Activated CD4-positive, alpha-beta T cell treated with anti-CD3 and anti-CD28 coated beads for 36 hours (primary cell): ENCODE measurements at regions of chr16 and their contacts with region 1.

Region 1: GRCh38 chr16:67935402-67936123 is 1.1 kb downstream of the PSMB10 start:
- DNase-seq: peak; percentile 98
- ATAC-seq: peak; percentile 91
- H3K4me3 Mint-ChIP-seq: peak overlapping the region; percentile 100
- H3K27ac Mint-ChIP-seq: peak overlapping the region; percentile 100
- H3K4me1 Mint-ChIP-seq: peaks cover 37% of the 10 kb centered on the region
- H3K27me3 Mint-ChIP-seq: no peaks in the 10 kb centered on the region

Region 2: GRCh38 chr16:67226804-67227557 is 708.6 kb before region 1 on chr16 and contains the start of gene TMEM208:
- CTCF ChIA-PET with region 1: no interaction called
- POLR2A ChIA-PET with region 1: no interaction called
- intact Hi-C with region 1: loop called in 1 of 2 experiments (anchors 2 kb)
- DNase-seq: peak; percentile 99
- ATAC-seq: peak; percentile 97
- H3K4me3 Mint-ChIP-seq: peak within 1 kb of the TSS; percentile 98
- H3K27ac Mint-ChIP-seq: peak within 1 kb of the TSS; percentile 98
- H3K4me1 Mint-ChIP-seq: peaks cover 42% of the 10 kb centered on the region
- H3K27me3 Mint-ChIP-seq: no peaks in the 10 kb centered on the region
- total RNA-seq, gene TMEM208: 13.6 to 31.2 TPM

Region 3: GRCh38 chr16:67514382-67514828 is 421.2 kb before region 1 on chr16:
- CTCF ChIA-PET with region 1: no interaction called
- POLR2A ChIA-PET with region 1: no interaction called
- intact Hi-C with region 1: no loop called
- DNase-seq: peak; percentile 91
- ATAC-seq: peak; percentile 91
- H3K4me3 Mint-ChIP-seq: no peak overlapping the region
- H3K27ac Mint-ChIP-seq: peak overlapping the region; percentile 55
- H3K4me1 Mint-ChIP-seq: peaks cover 8% of the 10 kb centered on the region
- H3K27me3 Mint-ChIP-seq: no peaks in the 10 kb centered on the region

Region 4: DNA sequence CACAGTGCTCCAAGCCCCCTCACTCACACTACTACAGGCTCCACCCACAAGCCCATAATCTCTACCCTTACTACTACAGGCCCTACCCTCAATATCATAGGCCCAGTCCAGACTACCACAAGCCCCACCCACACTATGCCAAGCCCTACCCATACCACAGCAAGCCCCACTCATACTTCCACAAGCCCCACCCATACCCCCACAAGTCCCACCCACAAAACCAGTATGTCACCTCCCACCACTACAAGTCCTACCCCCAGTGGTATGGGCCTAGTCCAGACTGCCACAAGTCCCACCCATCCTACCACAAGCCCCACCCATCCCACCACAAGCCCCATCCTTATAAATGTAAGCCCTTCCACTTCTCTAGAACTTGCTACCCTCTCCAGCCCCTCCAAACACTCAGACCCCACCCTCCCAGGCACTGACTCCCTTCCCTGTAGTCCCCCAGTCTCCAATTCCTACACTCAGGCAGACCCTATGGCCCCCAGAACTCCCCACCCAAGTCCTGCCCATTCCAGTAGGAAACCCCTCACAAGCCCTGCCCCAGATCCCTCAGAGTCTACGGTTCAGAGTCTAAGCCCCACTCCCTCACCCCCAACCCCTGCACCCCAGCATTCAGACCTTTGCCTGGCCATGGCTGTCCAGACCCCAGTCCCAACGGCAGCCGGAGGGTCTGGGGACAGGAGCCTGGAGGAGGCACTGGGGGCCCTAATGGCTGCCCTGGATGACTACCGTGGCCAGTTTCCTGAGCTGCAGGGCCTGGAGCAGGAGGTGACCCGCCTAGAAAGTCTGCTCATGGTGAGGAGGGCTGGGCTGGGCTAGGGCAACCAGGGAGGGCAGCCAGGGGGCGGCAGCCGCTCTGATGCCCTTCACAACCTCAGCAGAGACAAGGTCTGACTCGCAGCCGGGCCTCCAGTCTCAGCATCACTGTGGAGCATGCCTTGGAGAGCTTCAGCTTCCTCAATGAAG is 392.8 kb before region 1 on chr16:
- CTCF ChIA-PET with region 1: no interaction called
- POLR2A ChIA-PET with region 1: no interaction called
- intact Hi-C with region 1: no loop called
- DNase-seq: peak; percentile 75
- ATAC-seq: peak; percentile 78
- H3K4me3 Mint-ChIP-seq: no peak overlapping the region
- H3K27ac Mint-ChIP-seq: peak overlapping the region; percentile 27
- H3K4me1 Mint-ChIP-seq: peaks cover 26% of the 10 kb centered on the region
- H3K27me3 Mint-ChIP-seq: no peaks in the 10 kb centered on the region

Region 5: GRCh38 chr16:67672739-67673662 is 262.6 kb before region 1 on chr16:
- CTCF ChIA-PET with region 1: interaction called, 4 read pairs
- POLR2A ChIA-PET with region 1: interaction called, 3 read pairs
- intact Hi-C with region 1: loop called in 1 of 2 experiments (anchors 5 kb)
- DNase-seq: peak; percentile 77
- ATAC-seq: peak; percentile 25
- H3K4me3 Mint-ChIP-seq: no peak overlapping the region
- H3K27ac Mint-ChIP-seq: no peak overlapping the region
- H3K4me1 Mint-ChIP-seq: peaks cover 3% of the 10 kb centered on the region
- H3K27me3 Mint-ChIP-seq: no peaks in the 10 kb centered on the region

Region 6: DNA sequence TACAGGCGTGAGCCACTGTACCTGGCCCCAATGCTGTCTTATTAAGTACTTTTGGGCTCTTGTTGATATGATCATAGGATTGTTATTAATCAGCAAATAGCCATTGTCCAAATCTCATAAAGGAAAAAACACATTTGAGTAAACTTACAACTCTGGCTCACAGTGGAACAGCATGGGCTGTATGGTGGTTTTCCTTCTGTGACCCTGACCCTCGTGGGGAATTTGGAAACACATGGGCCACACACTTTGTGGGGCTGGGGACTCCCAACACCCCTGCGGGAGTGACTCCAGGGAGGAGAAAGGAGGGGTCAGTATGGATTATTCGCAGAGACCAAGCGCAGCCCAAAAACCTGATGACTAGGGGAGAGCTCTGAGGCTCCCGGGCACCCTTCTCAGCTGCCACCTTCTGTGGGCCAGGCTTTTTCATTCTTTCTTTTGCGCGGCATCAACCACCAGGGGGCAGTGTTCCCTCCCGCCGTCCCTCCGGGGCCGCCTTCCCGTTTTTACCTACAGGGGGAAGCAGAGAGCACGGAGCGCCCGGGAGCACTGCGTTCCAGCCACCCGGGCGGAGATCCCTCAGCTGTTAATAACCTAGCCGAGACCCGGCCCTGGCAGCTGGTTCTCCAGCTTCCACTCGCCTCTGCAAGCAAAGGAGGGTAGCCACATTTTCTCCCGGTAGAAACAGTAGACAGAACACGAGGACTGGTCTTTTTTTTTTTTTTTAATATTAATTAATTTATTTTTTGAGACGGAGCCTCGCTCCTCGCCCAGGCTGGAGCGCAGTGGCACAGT is 119.1 kb before region 1 on chr16:
- CTCF ChIA-PET with region 1: interaction called, 12 read pairs
- POLR2A ChIA-PET with region 1: no interaction called
- intact Hi-C with region 1: no loop called
- DNase-seq: peak; percentile 95
- ATAC-seq: peak; percentile 99
- H3K4me3 Mint-ChIP-seq: no peak overlapping the region
- H3K27ac Mint-ChIP-seq: peak overlapping the region; percentile 67
- H3K4me1 Mint-ChIP-seq: peaks cover 2% of the 10 kb centered on the region
- H3K27me3 Mint-ChIP-seq: no peaks in the 10 kb centered on the region

Region 7: DNA sequence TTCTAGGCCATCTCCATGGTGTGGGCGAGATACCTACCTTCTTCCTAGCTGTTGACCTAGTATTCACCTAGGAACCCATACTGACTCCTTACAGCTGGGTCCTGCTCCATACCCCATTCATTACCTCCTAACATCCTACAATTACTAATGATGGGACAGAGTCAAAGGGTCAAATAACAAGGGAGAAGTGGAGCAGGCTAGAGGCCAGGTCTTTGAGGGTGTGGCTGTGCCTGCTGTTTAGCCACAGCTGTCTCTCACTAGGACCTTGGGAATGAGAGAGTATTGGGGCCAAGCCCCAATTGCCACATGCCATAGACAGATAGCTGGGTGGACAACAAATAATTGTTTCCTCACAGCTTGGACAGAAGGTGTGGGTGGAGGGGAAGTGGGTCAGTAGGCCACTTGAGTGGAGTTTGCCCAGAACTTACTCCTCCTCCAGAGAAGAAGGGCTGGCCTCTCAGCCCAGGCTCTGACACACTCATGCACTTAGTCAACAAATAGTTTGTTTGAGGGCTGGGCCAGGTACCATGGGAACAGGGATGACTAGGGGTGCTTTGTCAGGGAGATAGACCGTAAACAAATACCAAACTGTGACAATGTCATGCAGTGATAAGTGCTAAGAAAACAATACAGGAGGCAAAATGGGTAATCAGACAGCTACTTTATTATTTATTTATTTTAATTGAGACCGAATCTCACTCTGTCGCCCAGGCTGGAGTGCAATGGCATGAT is 77.9 kb before region 1 on chr16:
- CTCF ChIA-PET with region 1: no interaction called
- POLR2A ChIA-PET with region 1: no interaction called
- intact Hi-C with region 1: no loop called
- DNase-seq: peak; percentile 55
- ATAC-seq: peak; percentile 91
- H3K4me3 Mint-ChIP-seq: no peak overlapping the region
- H3K27ac Mint-ChIP-seq: peak overlapping the region; percentile 40
- H3K4me1 Mint-ChIP-seq: peaks cover 32% of the 10 kb centered on the region
- H3K27me3 Mint-ChIP-seq: no peaks in the 10 kb centered on the region

Region 8: DNA sequence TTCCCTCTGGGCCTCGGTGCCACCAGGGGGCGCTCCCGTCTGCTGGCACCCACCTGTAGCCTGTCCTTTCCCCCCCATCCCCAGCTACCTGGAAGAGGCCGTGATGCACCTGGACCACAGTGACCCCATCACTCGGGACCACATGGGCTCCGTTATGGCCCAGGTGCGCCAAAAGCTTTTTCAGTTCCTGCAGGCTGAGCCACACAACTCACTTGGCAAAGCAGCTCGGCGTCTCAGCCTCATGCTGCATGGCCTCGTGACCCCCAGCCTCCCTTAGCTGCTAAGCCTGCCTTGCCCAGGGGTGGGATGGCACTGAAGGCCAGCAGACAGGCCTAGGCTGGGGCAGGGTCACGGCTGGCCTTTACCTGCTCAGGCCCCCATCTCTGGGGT is 51.7 kb before region 1 on chr16:
- CTCF ChIA-PET with region 1: interaction called, 20 read pairs
- POLR2A ChIA-PET with region 1: no interaction called
- intact Hi-C with region 1: no loop called
- DNase-seq: peak; percentile 85
- ATAC-seq: peak; percentile 92
- H3K4me3 Mint-ChIP-seq: no peak overlapping the region
- H3K27ac Mint-ChIP-seq: no peak overlapping the region
- H3K4me1 Mint-ChIP-seq: no peaks in the 10 kb centered on the region
- H3K27me3 Mint-ChIP-seq: no peaks in the 10 kb centered on the region

Region 9: GRCh38 chr16:67968400-67969253 is 33.1 kb after region 1 on chr16 and contains the start of gene SLC12A4:
- CTCF ChIA-PET with region 1: interaction called, 4 read pairs
- POLR2A ChIA-PET with region 1: interaction called, 3 read pairs
- intact Hi-C with region 1: loop called (anchors 1 to 2 kb)
- DNase-seq: peak; percentile 94
- ATAC-seq: peak; percentile 90
- H3K4me3 Mint-ChIP-seq: peak within 1 kb of the TSS; percentile 84
- H3K27ac Mint-ChIP-seq: peak within 1 kb of the TSS; percentile 80
- H3K4me1 Mint-ChIP-seq: peaks cover 14% of the 10 kb centered on the region
- H3K27me3 Mint-ChIP-seq: no peaks in the 10 kb centered on the region
- total RNA-seq, gene SLC12A4: 21.8 to 25.8 TPM

Region 10: GRCh38 chr16:68237243-68238028 is 301.9 kb after region 1 on chr16:
- CTCF ChIA-PET with region 1: no interaction called
- POLR2A ChIA-PET with region 1: no interaction called
- intact Hi-C with region 1: loop called (anchors 5 kb)
- DNase-seq: peak; percentile 96
- ATAC-seq: peak; percentile 79
- H3K4me3 Mint-ChIP-seq: peak overlapping the region; percentile 83
- H3K27ac Mint-ChIP-seq: peak overlapping the region; percentile 86
- H3K4me1 Mint-ChIP-seq: peaks cover 40% of the 10 kb centered on the region
- H3K27me3 Mint-ChIP-seq: no peaks in the 10 kb centered on the region